ENCODE measurements at regions of chr2 and their contacts with region 1.

Region 1: GRCh38 chr2:120885320-120885719 is 149.7 kb downstream of the GLI2 start:
- DNase-seq: no peak
- H3K4me3 ChIP-seq: no peak overlapping the region
- H3K27ac ChIP-seq: no peak overlapping the region
- H3K4me1 ChIP-seq: peaks cover 0 to 16% (median 11%) of the 10 kb centered on the region in 4 experiments; a peak in 6 of 7 replicates
- H3K27me3 ChIP-seq: no peaks in the 10 kb centered on the region
- CTCF ChIP-seq: peak in 2 of 3 experiments; percentile 45 to 48; a peak in 3 of 4 replicates
- EP300 ChIP-seq: no peak
- POLR2A ChIP-seq: no peak
- RAD21 ChIP-seq: peak; percentile 12 to 28; a peak in 2 of 4 replicates

Region 2: GRCh38 chr2:120833127-120833675 is 52.1 kb before region 1 on chr2:
- CTCF ChIA-PET with region 1: interaction called, 32 read pairs
- POLR2A ChIA-PET with region 1: no interaction called
- DNase-seq: no peak
- H3K4me3 ChIP-seq: no peak overlapping the region
- H3K27ac ChIP-seq: no peak overlapping the region
- H3K4me1 ChIP-seq: peaks cover 2 to 16% (median 8%) of the 10 kb centered on the region in 4 experiments; a peak in 6 of 7 replicates
- H3K27me3 ChIP-seq: no peaks in the 10 kb centered on the region
- CTCF ChIP-seq: peak in 2 of 3 experiments; percentile 42; a peak in 3 of 4 replicates
- EP300 ChIP-seq: no peak
- POLR2A ChIP-seq: no peak
- RAD21 ChIP-seq: peak; percentile 53 to 67; a peak in 3 of 4 replicates

Region 3: DNA sequence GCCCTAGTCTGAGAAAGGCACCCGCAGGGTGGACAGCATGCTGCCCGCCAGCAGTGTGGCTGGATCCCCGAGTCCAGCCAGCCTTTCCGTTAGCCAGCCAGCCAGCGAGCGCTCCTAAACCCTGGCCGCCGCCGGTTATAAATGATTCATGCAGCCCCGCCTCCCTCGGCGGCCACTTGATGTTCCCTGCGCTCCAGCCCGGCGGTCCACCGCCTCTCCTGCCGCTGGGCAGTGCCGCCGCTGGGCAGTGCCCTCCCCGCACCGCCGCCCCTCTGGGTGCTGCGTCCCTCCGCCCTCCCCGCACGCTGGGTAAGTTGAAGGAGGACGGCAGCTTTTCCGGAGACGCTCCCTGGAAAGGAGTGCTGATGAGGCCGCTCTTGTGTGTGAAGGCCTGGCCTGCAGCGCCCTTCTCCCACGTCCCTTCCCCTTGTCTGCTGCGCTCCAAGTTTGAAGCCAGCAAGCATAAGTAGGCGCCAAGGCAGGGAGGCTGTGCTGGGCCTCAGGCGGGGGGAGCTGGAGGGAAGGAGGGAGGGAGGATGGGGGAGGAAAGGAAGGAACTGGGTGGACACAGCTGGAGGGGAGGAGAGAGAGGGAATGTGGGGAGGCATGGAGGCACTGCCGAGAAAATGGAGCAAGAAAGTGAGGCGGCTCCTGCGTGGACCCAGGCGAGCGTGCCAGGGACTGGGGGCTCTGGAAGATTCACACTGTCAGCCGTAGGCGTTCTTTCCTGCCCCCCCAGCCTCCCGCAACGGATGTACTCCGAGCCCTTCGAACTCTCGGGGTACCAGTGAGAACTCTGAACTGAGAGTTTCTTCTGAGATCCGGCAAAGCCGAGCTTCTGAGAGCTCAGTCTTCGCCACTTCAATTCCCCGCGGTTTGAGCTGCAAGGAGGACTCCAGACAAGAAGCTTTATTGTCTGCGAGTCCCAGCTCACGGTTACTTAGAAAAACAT is 17.8 kb before region 1 on chr2:
- CTCF ChIA-PET with region 1: interaction called, 158 read pairs
- POLR2A ChIA-PET with region 1: interaction called, 5 read pairs
- DNase-seq: peak in 1 of 2 experiments; percentile 78
- H3K4me3 ChIP-seq: peak overlapping the region in 2 of 4 experiments; percentile 6 to 42; a peak in 4 of 8 replicates
- H3K27ac ChIP-seq: no peak overlapping the region
- H3K4me1 ChIP-seq: peaks cover 9 to 40% (median 18%) of the 10 kb centered on the region in 4 experiments
- H3K27me3 ChIP-seq: peaks cover 0 to 4% (median 0%) of the 10 kb centered on the region in 4 experiments; a peak in 1 of 7 replicates
- CTCF ChIP-seq: no peak
- EP300 ChIP-seq: no peak
- POLR2A ChIP-seq: no peak
- RAD21 ChIP-seq: no peak

Region 4: GRCh38 chr2:120898961-120899750 is 13.8 kb after region 1 on chr2:
- CTCF ChIA-PET with region 1: interaction called, 65 read pairs
- POLR2A ChIA-PET with region 1: no interaction called
- DNase-seq: no peak
- H3K4me3 ChIP-seq: no peak overlapping the region
- H3K27ac ChIP-seq: no peak overlapping the region; the same call in 1 of the 2 replicates
- H3K4me1 ChIP-seq: peaks cover 18 to 44% (median 28%) of the 10 kb centered on the region in 4 experiments
- H3K27me3 ChIP-seq: no peaks in the 10 kb centered on the region; a peak in 1 of 7 replicates
- CTCF ChIP-seq: no peak
- EP300 ChIP-seq: no peak
- POLR2A ChIP-seq: no peak
- RAD21 ChIP-seq: no peak

Region 5: GRCh38 chr2:120943403-120944034 is 58.2 kb after region 1 on chr2:
- CTCF ChIA-PET with region 1: interaction called, 12 read pairs
- POLR2A ChIA-PET with region 1: no interaction called
- DNase-seq: no peak
- H3K4me3 ChIP-seq: no peak overlapping the region
- H3K27ac ChIP-seq: no peak overlapping the region
- H3K4me1 ChIP-seq: peaks cover 0 to 3% (median 0%) of the 10 kb centered on the region in 4 experiments; a peak in 1 of 7 replicates
- H3K27me3 ChIP-seq: no peaks in the 10 kb centered on the region
- CTCF ChIP-seq: no peak
- EP300 ChIP-seq: no peak
- POLR2A ChIP-seq: no peak
- RAD21 ChIP-seq: no peak

Region 6: GRCh38 chr2:121052521-121052920 is 167.2 kb after region 1 on chr2:
- CTCF ChIA-PET with region 1: no interaction called
- POLR2A ChIA-PET with region 1: no interaction called
- DNase-seq: no peak
- H3K4me3 ChIP-seq: no peak overlapping the region
- H3K27ac ChIP-seq: no peak overlapping the region
- H3K4me1 ChIP-seq: no peaks in the 10 kb centered on the region
- H3K27me3 ChIP-seq: peaks cover 0 to 4% (median 3%) of the 10 kb centered on the region in 4 experiments; a peak in 3 of 7 replicates
- CTCF ChIP-seq: no peak
- EP300 ChIP-seq: no peak
- POLR2A ChIP-seq: no peak
- RAD21 ChIP-seq: no peak

Measured in H1 (cell line).